Activated T-helper 1 cell treated with anti-CD3 and anti-CD28 coated beads, Interleukin-12 subunit alpha, Interleukin-12 subunit beta, Interleukin-2, Interleukin-4 antibody, amounts not matched to agents 30 ng/mL and 10 ng/mL and 1 ng/mL, durations not matched to agents 14 hours and 24 hours and 36 hours (primary cell): ENCODE measurements at regions of chr9 and their contacts with region 1.

Region 1: GRCh38 chr9:101398068-101398929 is at the starts of genes MRPL50 and ZNF189:
- DNase-seq: peak; percentile 95
- H3K4me3 Mint-ChIP-seq: peak within 1 kb of the TSS; percentile 98
- H3K27ac Mint-ChIP-seq: peak within 1 kb of the TSS; percentile 99
- H3K4me1 Mint-ChIP-seq: peaks cover 45% of the 10 kb centered on the region
- H3K27me3 Mint-ChIP-seq: no peaks in the 10 kb centered on the region
- total RNA-seq, gene MRPL50: 16.3 and 16.6 TPM in 2 replicates
- total RNA-seq, gene ZNF189: 11.7 and 11.8 TPM in 2 replicates

Region 2: DNA sequence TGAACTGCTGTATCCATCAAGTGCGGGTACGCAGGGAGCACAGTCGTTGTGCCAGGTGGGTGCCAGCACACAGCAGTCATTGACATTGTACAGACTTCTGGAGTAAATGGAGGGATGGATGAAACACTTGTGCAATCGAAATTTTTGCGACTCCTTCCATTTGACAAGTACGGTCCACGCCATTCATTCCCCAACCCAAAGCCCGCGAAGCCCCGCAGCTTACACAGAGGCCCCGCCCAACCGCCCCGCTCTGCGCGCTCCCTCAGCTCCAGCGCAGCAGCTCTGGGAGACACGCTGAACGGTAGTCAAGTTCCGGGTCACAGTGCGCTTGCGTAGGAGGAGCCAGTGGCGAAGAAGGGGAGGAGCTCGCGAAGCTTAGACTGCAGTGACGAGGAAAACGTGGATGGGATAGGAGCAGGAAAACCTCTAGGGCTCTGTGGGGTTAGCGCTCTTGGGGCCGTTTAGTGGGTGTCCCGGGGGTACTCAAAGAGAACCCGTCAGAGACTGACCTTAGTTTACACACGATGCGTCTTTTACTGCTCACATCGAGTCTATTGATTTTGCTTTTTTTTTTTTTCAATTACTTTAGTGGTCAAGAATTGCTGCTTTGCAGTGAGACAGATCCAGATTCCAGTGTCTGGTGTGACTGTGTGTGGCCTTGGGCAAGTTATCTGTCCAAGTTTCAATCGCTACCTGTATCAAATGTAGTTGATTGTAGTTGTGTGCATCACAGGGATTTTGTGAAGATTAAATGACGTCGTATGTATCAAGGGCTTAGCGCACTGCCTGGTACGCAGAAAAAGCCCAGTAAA is 986.6 kb before region 1 on chr9:
- intact Hi-C with region 1: loop called (anchors 1 kb)
- DNase-seq: peak; percentile 81
- H3K4me3 Mint-ChIP-seq: peak overlapping the region; percentile 83
- H3K27ac Mint-ChIP-seq: peak overlapping the region; percentile 65
- H3K4me1 Mint-ChIP-seq: peaks cover 13% of the 10 kb centered on the region
- H3K27me3 Mint-ChIP-seq: peaks cover 11% of the 10 kb centered on the region

Region 3: GRCh38 chr9:101449140-101449721 is 50.9 kb after region 1 on chr9:
- intact Hi-C with region 1: loop called (anchors 5 kb)
- DNase-seq: peak; percentile 3
- H3K4me3 Mint-ChIP-seq: peak overlapping the region; percentile 40
- H3K27ac Mint-ChIP-seq: no peak overlapping the region
- H3K4me1 Mint-ChIP-seq: peaks cover 5% of the 10 kb centered on the region
- H3K27me3 Mint-ChIP-seq: peaks cover 30% of the 10 kb centered on the region

Region 4: GRCh38 chr9:101586651-101587050 is 188.4 kb after region 1 on chr9:
- intact Hi-C with region 1: loop called (anchors 1 kb)
- DNase-seq: peak; percentile 37
- H3K4me3 Mint-ChIP-seq: no peak overlapping the region
- H3K27ac Mint-ChIP-seq: no peak overlapping the region
- H3K4me1 Mint-ChIP-seq: peaks cover 18% of the 10 kb centered on the region
- H3K27me3 Mint-ChIP-seq: peaks cover 9% of the 10 kb centered on the region